Activated naive CD4-positive, alpha-beta T cell treated with anti-CD3 and anti-CD28 coated beads for 36 hours (primary cell): ENCODE measurements at regions of chr15 and their contacts with region 1.

Region 1: GRCh38 chr15:38453971-38454695 is at the start of gene FAM98B:
- DNase-seq: peak; percentile 92
- H3K4me3 Mint-ChIP-seq: peak within 1 kb of the TSS; percentile 94
- H3K27ac Mint-ChIP-seq: peak within 1 kb of the TSS; percentile 88
- H3K4me1 Mint-ChIP-seq: peaks cover 28% of the 10 kb centered on the region
- H3K27me3 Mint-ChIP-seq: no peaks in the 10 kb centered on the region
- total RNA-seq, gene FAM98B: 42.0 to 47.4 TPM

Region 2: DNA sequence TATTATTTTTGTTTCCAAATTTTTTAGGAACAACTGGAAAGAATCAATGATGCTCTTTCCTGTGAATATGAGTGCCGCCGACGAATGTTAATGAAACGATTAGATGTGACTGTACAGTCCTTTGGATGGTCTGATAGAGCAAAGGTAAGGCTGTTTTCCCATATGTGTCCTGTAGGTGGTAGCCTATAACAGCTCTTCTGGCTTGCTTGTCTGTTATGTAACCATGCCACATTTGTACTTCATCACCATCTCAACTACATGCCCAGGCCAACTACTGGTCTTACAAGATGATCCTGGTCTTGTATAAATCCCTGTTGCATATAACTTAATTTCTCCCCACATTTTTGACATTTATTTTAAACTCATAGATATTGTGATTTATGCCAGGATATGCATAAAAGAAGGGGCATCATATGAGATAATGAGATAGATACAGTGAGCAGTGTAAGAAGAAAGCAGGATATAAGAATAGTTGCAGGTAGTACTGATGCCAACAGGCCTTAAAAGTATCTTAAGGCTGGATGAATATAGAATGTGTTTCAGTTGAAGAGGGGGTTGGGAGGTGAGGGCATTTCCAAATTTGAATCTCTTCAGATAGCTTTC is 20.1 kb after region 1 on chr15:
- CTCF ChIA-PET with region 1: interaction called, 6 read pairs
- intact Hi-C with region 1: loop called (anchors 2 kb)
- DNase-seq: peak; percentile 30
- H3K4me3 Mint-ChIP-seq: no peak overlapping the region
- H3K27ac Mint-ChIP-seq: peak overlapping the region; percentile 55
- H3K4me1 Mint-ChIP-seq: peaks cover 4% of the 10 kb centered on the region
- H3K27me3 Mint-ChIP-seq: no peaks in the 10 kb centered on the region